Activated naive CD4-positive, alpha-beta T cell treated with anti-CD3 and anti-CD28 coated beads, Interleukin-2, amount 10 ng/mL, durations not matched to agents 7 days and 5 days (primary cell): ENCODE measurements at regions of chr3 and their contacts with region 1.

Region 1: GRCh38 chr3:10344147-10344943 is 23.4 kb upstream of the SEC13 start:
- DNase-seq: peak; percentile 69
- H3K4me3 Mint-ChIP-seq: no peak overlapping the region
- H3K27ac Mint-ChIP-seq: no peak overlapping the region
- H3K4me1 Mint-ChIP-seq: no peaks in the 10 kb centered on the region
- H3K27me3 Mint-ChIP-seq: peaks cover 4% of the 10 kb centered on the region

Region 2: DNA sequence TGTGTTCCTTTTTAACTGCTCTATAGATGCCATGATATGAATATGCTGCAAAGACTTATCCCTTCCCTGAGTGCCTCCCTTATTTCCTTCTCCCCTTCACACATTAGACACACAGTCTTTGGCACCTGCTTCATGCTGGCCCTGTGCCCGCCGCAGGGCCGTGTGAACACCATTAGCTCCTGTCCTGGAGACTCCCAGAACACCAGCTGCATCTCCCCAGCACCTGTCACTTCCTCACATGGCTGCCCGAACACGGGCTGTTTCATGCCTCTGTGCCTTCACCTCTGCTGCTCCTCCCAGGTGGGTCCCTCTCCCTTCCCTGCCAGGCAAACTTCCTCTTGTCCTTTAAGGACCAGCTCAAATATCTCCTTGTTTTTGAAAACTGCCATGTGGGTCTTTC is 17.0 kb after region 1 on chr3:
- CTCF ChIA-PET with region 1: interaction called, 13 read pairs
- DNase-seq: no peak
- H3K4me3 Mint-ChIP-seq: no peak overlapping the region
- H3K27ac Mint-ChIP-seq: no peak overlapping the region
- H3K4me1 Mint-ChIP-seq: peaks cover under 1% of the 10 kb centered on the region
- H3K27me3 Mint-ChIP-seq: peaks cover 5% of the 10 kb centered on the region

Region 3: GRCh38 chr3:10437272-10437994 is 93.1 kb after region 1 on chr3:
- CTCF ChIA-PET with region 1: interaction called, 11 read pairs
- DNase-seq: peak; percentile 77
- H3K4me3 Mint-ChIP-seq: no peak overlapping the region
- H3K27ac Mint-ChIP-seq: peak overlapping the region; percentile 82
- H3K4me1 Mint-ChIP-seq: peaks cover 21% of the 10 kb centered on the region
- H3K27me3 Mint-ChIP-seq: no peaks in the 10 kb centered on the region